Heart left ventricle (tissue), 16 donors: ENCODE measurements at regions of chr3 and their contacts with region 1.

Region 1: GRCh38 chr3:40580494-40581091 is 55.8 kb downstream of the ZNF621 start:
- DNase-seq: peak; percentile 55 to 66 (median 61)
- ATAC-seq: peak in 3 of 4 donors; percentile 56 to 70 (median 68)
- H3K4me3 ChIP-seq: no peak overlapping the region
- H3K27ac ChIP-seq: no peak overlapping the region
- H3K4me1 ChIP-seq: peaks cover 0 to 22% (median 10%) of the 10 kb centered on the region in 12 donors
- H3K27me3 ChIP-seq: no peaks in the 10 kb centered on the region
- CTCF ChIP-seq: peak; percentile 89 to 98 (median 94)
- POLR2A ChIP-seq: no peak

Region 2: DNA sequence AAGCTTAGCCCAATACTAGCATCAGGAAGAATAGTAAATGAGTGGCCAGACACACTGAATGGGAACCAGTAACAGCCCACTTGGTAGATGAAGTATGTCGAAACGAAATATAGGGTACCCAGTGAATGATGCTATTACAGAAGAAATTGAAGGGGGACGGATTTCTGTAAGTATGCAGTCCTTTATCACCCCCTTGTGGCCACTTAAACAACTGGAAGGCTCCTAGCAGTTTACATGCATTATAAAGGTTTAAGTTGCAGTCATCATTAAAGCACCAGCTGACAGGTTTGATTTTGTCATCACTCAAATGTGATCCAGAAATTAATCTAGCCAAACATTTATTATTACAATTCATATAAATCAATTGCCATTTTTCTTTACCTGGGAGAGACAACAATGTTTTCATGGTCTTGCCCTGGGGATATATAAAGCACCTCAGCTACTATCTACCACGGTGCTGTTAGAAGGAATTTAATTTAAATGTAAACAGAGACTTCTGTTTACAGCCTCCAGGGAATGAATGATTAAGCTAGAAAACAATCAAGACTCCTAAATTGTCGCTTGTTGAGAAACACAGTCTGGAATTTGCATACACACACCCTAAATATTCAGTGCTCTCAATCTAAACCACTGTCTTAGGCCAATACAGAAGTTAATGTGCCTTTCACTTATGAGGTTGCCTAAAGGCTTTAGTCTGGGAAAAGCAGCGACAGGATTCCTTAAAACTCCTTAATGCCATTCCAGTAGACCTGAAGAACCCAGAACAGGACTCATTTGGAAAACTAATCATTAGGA is 263.3 kb before region 1 on chr3:
- intact Hi-C with region 1: loop called in 2 of 10 experiments (anchors 10 kb)
- DNase-seq: peak in 2 of 5 donors; percentile 19 to 30
- ATAC-seq: no peak
- H3K4me3 ChIP-seq: no peak overlapping the region
- H3K27ac ChIP-seq: no peak overlapping the region
- H3K4me1 ChIP-seq: peaks cover 0 to 27% (median 15%) of the 10 kb centered on the region in 12 donors
- H3K27me3 ChIP-seq: no peaks in the 10 kb centered on the region
- CTCF ChIP-seq: peak; percentile 67 to 89 (median 82)
- POLR2A ChIP-seq: no peak

Region 3: GRCh38 chr3:40719660-40720287 is 139.2 kb after region 1 on chr3:
- intact Hi-C with region 1: loop called in 2 of 10 experiments (anchors 10 kb)
- DNase-seq: no peak
- ATAC-seq: no peak
- H3K4me3 ChIP-seq: no peak overlapping the region
- H3K27ac ChIP-seq: no peak overlapping the region
- H3K4me1 ChIP-seq: peaks cover 0 to 8% (median 0%) of the 10 kb centered on the region in 12 donors
- H3K27me3 ChIP-seq: no peaks in the 10 kb centered on the region
- CTCF ChIP-seq: peak in 11 of 12 donors; percentile 25 to 62 (median 40)
- POLR2A ChIP-seq: no peak

Region 4: DNA sequence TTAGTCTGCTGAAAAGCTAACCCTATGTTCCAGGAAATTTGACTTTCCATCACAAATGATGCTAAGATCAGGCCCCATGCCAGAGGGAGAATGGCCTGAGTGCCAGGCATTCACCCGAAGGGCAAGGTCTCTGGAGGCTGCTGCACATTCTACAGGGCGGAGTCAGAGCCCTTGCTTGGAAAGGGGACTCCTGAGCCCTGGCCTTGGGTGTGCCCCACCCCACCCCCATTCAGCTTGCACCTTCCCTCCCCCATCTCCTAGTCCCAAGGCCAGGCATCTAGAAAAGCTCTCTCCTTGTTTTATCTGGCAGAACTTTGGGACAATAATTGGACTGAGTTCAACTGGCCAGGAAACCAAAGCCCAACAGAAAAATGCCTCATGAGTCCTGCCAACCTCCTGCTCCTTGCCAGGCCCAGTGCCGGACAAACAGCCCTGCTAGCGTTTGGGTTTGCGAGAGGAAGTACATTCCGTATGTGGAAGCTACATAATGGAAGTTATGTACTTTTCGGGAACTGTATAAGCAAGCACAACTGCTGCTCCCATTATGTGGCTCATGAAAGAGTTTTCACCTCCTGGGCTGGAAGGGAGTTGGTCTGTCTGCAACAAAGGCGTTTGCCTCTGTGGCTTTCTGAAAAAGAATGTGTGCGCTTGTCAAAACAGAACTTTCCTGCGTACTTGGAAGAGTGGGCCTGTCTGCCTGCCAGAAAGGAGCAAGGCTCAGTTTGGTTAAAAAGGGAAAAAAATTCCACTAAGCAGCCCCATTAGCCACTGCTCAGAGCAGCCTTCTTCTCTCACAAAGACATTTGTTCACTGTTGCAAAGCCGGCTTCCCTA is 297.3 kb after region 1 on chr3:
- intact Hi-C with region 1: loop called in 1 of 10 experiments (anchors 10 kb)
- DNase-seq: peak; percentile 71 to 84 (median 79)
- ATAC-seq: peak; percentile 90 to 93 (median 92)
- H3K4me3 ChIP-seq: peak overlapping the region in 1 of 12 donors; percentile 17
- H3K27ac ChIP-seq: peak overlapping the region; percentile 13 to 88 (median 74)
- H3K4me1 ChIP-seq: peaks cover 4 to 38% (median 28%) of the 10 kb centered on the region in 12 donors
- H3K27me3 ChIP-seq: no peaks in the 10 kb centered on the region
- CTCF ChIP-seq: peak in 1 of 12 donors; percentile 9
- POLR2A ChIP-seq: no peak

Region 5: DNA sequence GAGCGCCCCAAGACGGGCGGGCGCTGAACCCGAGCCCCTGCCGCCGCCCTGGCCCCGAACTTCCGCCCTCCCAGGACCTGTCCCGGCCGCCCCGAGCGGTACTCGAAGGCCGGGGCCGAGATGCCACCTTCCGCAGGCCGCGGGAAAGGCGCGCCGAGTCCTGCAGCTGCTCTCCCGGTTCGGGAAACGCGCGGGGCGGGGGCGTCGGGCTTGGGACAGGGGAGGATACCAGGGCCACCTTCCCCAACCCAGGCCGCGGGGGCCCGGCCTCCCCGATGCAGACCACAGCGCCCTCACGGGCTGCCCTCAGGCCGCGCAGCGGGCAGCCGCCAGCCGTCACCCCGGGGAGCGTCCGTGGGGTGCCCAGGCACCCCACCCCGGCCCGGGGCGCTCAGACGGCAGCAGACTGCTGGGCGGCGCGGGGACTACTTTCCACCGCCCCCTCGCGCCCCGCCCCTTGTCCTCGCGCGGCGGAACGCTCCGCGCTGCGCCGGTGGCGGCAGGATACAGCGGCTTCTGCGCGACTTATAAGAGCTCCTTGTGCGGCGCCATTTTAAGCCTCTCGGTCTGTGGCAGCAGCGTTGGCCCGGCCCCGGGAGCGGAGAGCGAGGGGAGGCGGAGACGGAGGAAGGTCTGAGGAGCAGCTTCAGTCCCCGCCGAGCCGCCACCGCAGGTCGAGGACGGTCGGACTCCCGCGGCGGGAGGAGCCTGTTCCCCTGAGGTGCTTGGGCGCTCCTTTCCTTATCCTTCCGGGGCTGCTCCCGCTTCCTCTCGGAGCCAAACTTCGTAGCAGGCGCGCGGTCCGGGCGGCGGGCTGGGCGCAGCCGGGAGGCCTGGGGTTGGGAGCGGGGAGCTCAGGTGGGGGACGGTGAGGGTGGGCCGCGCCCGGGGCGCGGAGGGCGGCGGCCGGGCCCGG is 618.6 kb after region 1 on chr3 and contains the start of gene CTNNB1:
- intact Hi-C with region 1: loop called (anchors 2 to 10 kb)
- DNase-seq: peak; percentile 94 to 97 (median 95)
- ATAC-seq: peak; percentile 73 to 96 (median 92)
- H3K4me3 ChIP-seq: peak within 1 kb of the TSS; percentile 47 to 90 (median 84)
- H3K27ac ChIP-seq: peak within 1 kb of the TSS; percentile 95 to 99 (median 98)
- H3K4me1 ChIP-seq: peaks cover 5 to 41% (median 31%) of the 10 kb centered on the region in 12 donors
- H3K27me3 ChIP-seq: no peaks in the 10 kb centered on the region
- CTCF ChIP-seq: peak in 5 of 12 donors; percentile 13 to 33 (median 27)
- POLR2A ChIP-seq: peak in 1 of 2 donors; percentile 93
- total RNA-seq, gene CTNNB1: 145 to 301 (median 208) TPM

Region 6: GRCh38 chr3:41716471-41716870 is 1135.9 kb after region 1 on chr3:
- intact Hi-C with region 1: loop called in 9 of 10 experiments (anchors 1 to 10 kb)
- DNase-seq: no peak
- ATAC-seq: no peak
- H3K4me3 ChIP-seq: no peak overlapping the region
- H3K27ac ChIP-seq: no peak overlapping the region
- H3K4me1 ChIP-seq: peaks cover 0 to 8% (median 0%) of the 10 kb centered on the region in 12 donors
- H3K27me3 ChIP-seq: no peaks in the 10 kb centered on the region
- CTCF ChIP-seq: peak in 10 of 12 donors; percentile 17 to 48 (median 30)
- POLR2A ChIP-seq: no peak